ENCODE measurements at regions of chr18 and their contacts with region 1.

Region 1: DNA sequence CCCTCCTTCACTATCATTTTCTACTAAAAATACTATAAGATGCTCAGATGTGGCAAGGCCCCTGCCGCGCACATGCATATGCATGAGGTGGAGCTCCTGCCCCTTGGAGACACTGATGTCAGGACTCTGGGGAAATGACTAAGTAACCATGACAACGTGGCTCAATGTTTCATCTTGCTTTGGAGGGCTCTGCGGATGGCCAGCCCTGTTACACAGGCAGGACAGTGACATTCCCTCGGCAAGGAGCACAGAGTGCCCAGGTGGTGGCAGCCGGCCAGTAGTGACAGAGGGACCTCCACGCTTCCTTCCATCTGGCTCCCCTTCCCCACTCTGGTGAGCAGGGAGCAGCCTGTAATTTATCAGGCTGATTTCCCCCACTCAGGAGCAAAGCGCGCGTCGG is 364.1 kb downstream of the SS18 start:
- DNase-seq: no peak
- ATAC-seq: peak in 1 of 8 donors; percentile 29
- H3K4me3 ChIP-seq: no peak overlapping the region
- H3K27ac ChIP-seq: no peak overlapping the region
- H3K4me1 ChIP-seq: no peaks in the 10 kb centered on the region
- H3K27me3 ChIP-seq: peaks cover 0 to 19% (median 0%) of the 10 kb centered on the region in 7 donors
- CTCF ChIP-seq: no peak

Region 2: GRCh38 chr18:25310045-25310444 is 416.3 kb before region 1 on chr18:
- intact Hi-C with region 1: loop called in 1 of 10 experiments (anchors 5 kb)
- DNase-seq: no peak
- ATAC-seq: no peak
- H3K4me3 ChIP-seq: no peak overlapping the region
- H3K27ac ChIP-seq: no peak overlapping the region
- H3K4me1 ChIP-seq: peaks cover 0 to 12% (median 6%) of the 10 kb centered on the region in 9 donors
- H3K27me3 ChIP-seq: no peaks in the 10 kb centered on the region
- CTCF ChIP-seq: peak in 5 of 9 donors; percentile 29 to 53 (median 35)

Region 3: DNA sequence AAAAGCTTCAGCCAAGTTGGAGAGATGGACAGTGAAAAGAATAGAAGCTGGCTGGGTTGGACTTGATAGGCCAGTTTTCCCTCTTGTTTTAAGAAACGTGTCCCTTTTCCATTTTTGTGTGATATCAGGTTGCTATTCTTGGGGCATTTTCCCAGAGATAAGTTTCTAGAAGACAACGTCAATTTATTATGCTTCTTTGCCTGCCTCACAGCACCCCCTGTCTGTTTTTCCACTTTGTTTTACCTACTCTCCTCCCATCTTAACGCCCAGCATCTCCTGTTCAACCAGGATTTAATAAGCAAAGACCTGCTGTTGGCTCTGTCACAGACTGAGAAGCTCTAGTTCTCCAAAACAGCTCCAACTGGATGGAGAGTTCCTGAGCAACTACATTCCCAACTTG is 56.6 kb before region 1 on chr18:
- intact Hi-C with region 1: loop called in 1 of 10 experiments (anchors 10 kb)
- DNase-seq: no peak
- ATAC-seq: no peak
- H3K4me3 ChIP-seq: no peak overlapping the region
- H3K27ac ChIP-seq: no peak overlapping the region
- H3K4me1 ChIP-seq: no peaks in the 10 kb centered on the region
- H3K27me3 ChIP-seq: peaks cover 0 to 2% (median 0%) of the 10 kb centered on the region in 7 donors
- CTCF ChIP-seq: peak in 1 of 9 donors; percentile 29